Aorta (tissue), 5 donors: ENCODE measurements at regions of chr3 and their contacts with region 1.

Region 1: DNA sequence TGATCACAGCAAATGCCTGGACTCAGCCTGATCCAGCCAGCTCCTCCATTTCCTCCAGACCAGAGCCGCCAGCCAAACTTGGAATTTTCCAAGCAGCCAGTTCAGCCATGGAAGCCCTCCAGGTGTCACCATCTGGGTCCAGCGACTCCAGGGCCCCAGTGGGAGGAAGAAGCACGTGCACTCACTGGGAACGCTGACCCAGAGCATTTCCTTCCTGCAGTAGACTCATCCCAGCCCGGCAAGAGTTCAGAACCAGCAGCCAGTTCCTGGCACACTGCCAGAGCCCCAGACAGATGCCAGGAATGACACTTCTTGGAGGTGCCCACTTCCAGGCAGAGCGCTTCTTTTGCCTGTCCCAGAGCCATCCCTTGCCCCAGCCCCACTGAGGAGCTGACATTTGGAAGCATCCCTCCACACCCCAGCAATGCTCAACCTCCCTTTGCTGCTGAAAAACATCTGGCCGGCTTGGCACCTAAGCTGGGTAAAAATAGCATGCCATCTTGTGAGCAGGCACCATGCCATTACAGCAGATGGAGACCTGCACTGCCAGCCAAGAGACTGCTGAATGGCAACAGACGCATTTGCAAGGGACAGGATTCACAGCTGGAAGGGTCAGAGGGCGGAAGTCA is 460.3 kb upstream of the PROK2 start:
- DNase-seq: peak; percentile 84 to 86
- ATAC-seq: peak; percentile 75
- H3K4me3 ChIP-seq: no peak overlapping the region
- H3K27ac ChIP-seq: peak overlapping the region in 1 of 2 donors; percentile 73
- H3K4me1 ChIP-seq: peaks cover 0 to 15% of the 10 kb centered on the region in 2 donors
- H3K27me3 ChIP-seq: no peaks in the 10 kb centered on the region

Region 2: GRCh38 chr3:72177083-72178050 is 67.9 kb before region 1 on chr3:
- intact Hi-C with region 1: loop called in 1 of 2 experiments (anchors 10 kb)
- DNase-seq: peak; percentile 82 to 84
- ATAC-seq: peak; percentile 51
- H3K4me3 ChIP-seq: no peak overlapping the region
- H3K27ac ChIP-seq: no peak overlapping the region
- H3K4me1 ChIP-seq: peaks cover 3 to 16% of the 10 kb centered on the region in 2 donors
- H3K27me3 ChIP-seq: no peaks in the 10 kb centered on the region